ENCODE measurements at regions of chr9 and their contacts with region 1.

Region 1: GRCh38 chr9:89602978-89603766 is 1.6 kb upstream of the GADD45G start:
- DNase-seq: peak; percentile 92
- ATAC-seq: peak; percentile 24
- H3K4me3 Mint-ChIP-seq: peak overlapping the region; percentile 75
- H3K27ac Mint-ChIP-seq: peak overlapping the region; percentile 75
- H3K4me1 Mint-ChIP-seq: peaks cover 32% of the 10 kb centered on the region
- H3K27me3 Mint-ChIP-seq: peaks cover 56% of the 10 kb centered on the region

Region 2: GRCh38 chr9:89542401-89543021 is 60.7 kb before region 1 on chr9:
- CTCF ChIA-PET with region 1: no interaction called
- DNase-seq: no peak
- ATAC-seq: no peak
- H3K4me3 Mint-ChIP-seq: no peak overlapping the region
- H3K27ac Mint-ChIP-seq: no peak overlapping the region
- H3K4me1 Mint-ChIP-seq: peaks cover 28% of the 10 kb centered on the region
- H3K27me3 Mint-ChIP-seq: no peaks in the 10 kb centered on the region

Region 3: DNA sequence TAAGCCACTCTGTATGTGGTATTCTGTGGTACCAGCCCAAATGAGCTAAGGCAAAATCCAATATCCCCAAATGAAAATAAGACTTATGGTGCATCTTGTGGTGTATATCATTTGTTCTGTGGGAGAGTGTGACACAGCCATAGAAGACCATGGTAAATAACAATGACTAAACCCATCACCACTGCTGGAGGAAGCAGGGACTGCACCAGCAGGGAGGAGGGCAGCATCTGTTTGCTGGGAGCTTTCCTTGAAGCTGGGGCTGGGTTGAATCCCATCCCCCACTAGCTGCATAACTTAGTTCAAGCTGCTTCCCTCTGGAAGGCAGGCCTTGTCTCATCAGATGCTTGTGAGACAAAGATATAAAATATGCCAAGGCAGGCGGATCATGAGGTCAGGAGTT is 15.8 kb after region 1 on chr9:
- CTCF ChIA-PET with region 1: interaction called, 31 read pairs
- DNase-seq: no peak
- ATAC-seq: no peak
- H3K4me3 Mint-ChIP-seq: no peak overlapping the region
- H3K27ac Mint-ChIP-seq: no peak overlapping the region
- H3K4me1 Mint-ChIP-seq: peaks cover 12% of the 10 kb centered on the region
- H3K27me3 Mint-ChIP-seq: peaks cover 28% of the 10 kb centered on the region

Region 4: DNA sequence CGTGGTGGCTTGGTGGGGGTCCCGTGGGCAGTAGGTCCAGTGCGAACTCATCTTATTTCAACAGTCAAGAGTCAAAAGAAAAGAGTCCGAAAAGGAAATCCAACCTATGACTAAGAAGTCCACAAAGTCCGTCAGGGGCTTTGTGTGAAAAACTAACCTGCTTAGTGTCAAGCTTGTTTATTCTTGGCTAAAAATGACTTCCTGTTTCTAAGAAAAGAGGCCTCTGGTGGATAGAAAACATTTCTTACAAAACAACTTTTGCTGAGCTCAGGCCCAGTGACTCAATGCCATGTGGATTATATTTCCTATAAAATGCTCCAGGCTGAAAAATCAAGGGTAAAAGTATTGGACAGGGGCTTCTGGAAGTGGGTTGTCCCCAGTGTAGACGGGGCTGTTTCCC is 107.5 kb after region 1 on chr9:
- CTCF ChIA-PET with region 1: interaction called, 11 read pairs
- DNase-seq: no peak
- ATAC-seq: no peak
- H3K4me3 Mint-ChIP-seq: no peak overlapping the region
- H3K27ac Mint-ChIP-seq: peak overlapping the region; percentile 76
- H3K4me1 Mint-ChIP-seq: peaks cover 81% of the 10 kb centered on the region
- H3K27me3 Mint-ChIP-seq: no peaks in the 10 kb centered on the region

Region 5: GRCh38 chr9:89878687-89879086 is 275.5 kb after region 1 on chr9:
- CTCF ChIA-PET with region 1: interaction called, 43 read pairs
- DNase-seq: peak; percentile 25
- ATAC-seq: no peak
- H3K4me3 Mint-ChIP-seq: no peak overlapping the region
- H3K27ac Mint-ChIP-seq: no peak overlapping the region
- H3K4me1 Mint-ChIP-seq: no peaks in the 10 kb centered on the region
- H3K27me3 Mint-ChIP-seq: no peaks in the 10 kb centered on the region

Region 6: GRCh38 chr9:89929673-89930480 is 326.7 kb after region 1 on chr9:
- CTCF ChIA-PET with region 1: interaction called, 40 read pairs
- DNase-seq: no peak
- ATAC-seq: no peak
- H3K4me3 Mint-ChIP-seq: no peak overlapping the region
- H3K27ac Mint-ChIP-seq: no peak overlapping the region
- H3K4me1 Mint-ChIP-seq: peaks cover 2% of the 10 kb centered on the region
- H3K27me3 Mint-ChIP-seq: peaks cover 47% of the 10 kb centered on the region

Region 7: DNA sequence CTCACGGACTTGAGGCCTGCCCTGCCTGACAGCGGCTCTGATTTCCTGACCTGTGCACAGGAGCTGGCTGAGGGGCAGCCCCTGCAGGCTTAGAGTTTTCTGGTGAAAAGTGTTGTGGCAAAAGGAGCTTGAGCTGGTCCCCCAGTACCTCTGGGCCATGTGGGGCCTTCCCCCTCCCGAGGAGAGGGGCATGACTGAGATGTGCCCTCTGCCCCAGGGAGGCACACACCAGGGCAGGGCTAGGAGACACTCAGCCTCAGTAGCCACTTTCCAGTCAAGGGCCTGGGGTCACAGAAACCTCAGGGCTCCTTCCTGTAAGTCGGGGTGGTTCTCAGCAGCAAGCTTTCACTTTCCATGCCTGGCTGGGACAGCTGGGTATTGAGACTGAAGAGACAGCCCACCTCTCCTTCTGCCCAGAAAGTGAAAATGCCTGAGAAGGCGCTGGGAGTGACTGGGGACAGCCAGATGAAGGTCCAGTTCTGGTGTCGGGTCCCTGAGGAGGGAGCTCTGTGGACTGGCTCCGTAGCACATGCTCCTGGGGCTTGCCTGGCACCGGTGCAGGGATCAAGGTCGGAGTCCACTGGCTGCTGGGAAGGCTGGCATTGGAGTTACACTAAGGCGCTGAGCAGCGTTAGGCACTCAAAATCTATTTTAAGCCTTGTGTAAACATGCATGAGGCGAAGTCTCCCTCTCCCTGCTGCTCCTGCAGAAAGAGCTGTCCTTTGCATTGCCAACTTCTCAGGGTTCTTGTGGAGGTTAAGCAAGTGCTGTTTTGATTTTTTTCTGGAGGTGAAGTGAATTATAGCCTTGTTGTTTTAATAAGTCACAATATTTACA is 396.6 kb after region 1 on chr9:
- CTCF ChIA-PET with region 1: interaction called, 28 read pairs
- DNase-seq: peak; percentile 85
- ATAC-seq: peak; percentile 87
- H3K4me3 Mint-ChIP-seq: peak overlapping the region; percentile 12
- H3K27ac Mint-ChIP-seq: peak overlapping the region; percentile 26
- H3K4me1 Mint-ChIP-seq: peaks cover 26% of the 10 kb centered on the region
- H3K27me3 Mint-ChIP-seq: peaks cover 17% of the 10 kb centered on the region

Region 8: DNA sequence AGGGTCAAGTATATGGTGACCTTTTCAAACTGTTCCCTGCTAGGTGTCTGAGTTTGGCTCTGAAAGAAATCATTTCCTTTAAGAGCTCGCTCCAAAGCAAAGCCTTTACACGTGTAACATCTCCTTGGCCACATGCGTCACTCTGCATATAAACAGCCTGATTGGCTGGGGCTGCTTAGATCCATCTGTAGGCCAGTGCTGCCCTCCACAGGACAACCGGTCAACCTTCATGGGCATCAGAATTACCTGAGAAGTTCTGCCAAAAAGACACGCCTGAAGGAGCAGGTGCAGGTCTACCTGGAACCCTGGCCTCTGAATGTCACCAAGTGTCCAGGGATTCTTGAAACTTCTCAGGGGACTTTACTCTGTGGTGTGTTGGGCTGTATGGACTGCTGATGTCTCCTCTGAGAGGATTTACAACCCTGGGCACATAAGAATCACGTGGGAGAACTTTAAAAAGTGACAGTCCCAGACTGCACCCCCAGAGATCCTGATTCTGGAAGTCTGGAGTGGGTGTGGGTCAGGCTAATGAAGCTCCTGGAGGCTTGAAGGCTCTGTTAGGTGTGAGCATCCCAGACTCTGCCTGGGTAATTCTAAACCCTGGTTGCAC is 499.2 kb after region 1 on chr9:
- CTCF ChIA-PET with region 1: interaction called, 168 read pairs
- DNase-seq: peak; percentile 87
- ATAC-seq: peak; percentile 98
- H3K4me3 Mint-ChIP-seq: no peak overlapping the region
- H3K27ac Mint-ChIP-seq: no peak overlapping the region
- H3K4me1 Mint-ChIP-seq: peaks cover 22% of the 10 kb centered on the region
- H3K27me3 Mint-ChIP-seq: peaks cover 16% of the 10 kb centered on the region

Measured in activated CD8-positive, alpha-beta memory T cell treated with anti-CD3 and anti-CD28 coated beads, Interleukin-2, amount 10 ng/mL, durations not matched to agents 7 days and 5 days (primary cell).